Activated B cell treated with CpG ODN at 0.5 μM for 24 hours (primary cell): ENCODE measurements at regions of chr1 and their contacts with region 1.

Region 1: DNA sequence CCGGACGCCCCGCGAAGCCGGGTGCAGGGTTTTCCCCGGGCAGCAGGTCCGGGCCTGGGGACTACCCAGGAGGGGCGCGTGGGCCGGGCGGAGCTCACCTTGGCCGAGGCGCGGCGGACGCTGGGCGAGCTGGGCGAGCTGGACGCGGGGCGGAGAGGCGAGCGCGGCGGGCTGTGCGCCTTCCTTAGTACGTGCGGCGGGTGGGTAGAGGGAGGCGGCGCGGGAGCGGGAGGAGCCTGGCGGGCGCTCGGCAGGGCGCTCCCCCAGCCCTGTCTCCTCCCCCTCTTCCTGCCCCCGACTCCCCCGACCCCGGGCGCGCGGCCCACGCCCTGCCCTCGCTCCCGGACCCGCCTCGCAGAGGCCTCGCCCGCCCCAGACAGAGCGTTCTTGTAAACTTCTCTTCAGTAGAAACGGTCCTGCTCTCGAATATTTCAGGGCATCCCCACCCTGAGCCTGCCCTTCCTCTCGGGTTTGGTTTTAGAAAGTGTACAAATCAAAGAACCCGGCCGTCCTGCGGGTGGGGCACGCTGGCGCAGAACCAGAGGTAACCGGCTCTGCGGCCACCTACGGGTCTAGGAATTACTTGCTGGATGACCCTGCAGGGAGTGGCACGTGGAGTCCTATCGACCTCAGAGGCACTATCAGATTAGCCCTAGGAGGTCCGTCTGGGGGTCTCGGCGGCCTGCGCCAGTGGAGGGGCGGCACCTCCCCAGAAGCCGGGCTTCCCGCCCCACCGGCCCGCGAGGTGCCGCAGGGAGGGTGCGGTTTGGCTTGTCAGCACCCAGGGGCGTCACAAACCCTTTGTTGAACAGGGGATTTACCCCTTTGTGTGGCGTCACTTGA is at the start of gene S100A10:
- DNase-seq: peak; percentile 62
- ATAC-seq: peak; percentile 83
- H3K4me3 Mint-ChIP-seq: peak within 1 kb of the TSS; percentile 93
- H3K27ac Mint-ChIP-seq: peak within 1 kb of the TSS; percentile 83
- H3K4me1 Mint-ChIP-seq: peaks cover 26% of the 10 kb centered on the region
- H3K27me3 Mint-ChIP-seq: no peaks in the 10 kb centered on the region
- CTCF ChIP-seq: no peak
- total RNA-seq, gene S100A10: 62.7 and 63.6 TPM in 2 replicates

Region 2: DNA sequence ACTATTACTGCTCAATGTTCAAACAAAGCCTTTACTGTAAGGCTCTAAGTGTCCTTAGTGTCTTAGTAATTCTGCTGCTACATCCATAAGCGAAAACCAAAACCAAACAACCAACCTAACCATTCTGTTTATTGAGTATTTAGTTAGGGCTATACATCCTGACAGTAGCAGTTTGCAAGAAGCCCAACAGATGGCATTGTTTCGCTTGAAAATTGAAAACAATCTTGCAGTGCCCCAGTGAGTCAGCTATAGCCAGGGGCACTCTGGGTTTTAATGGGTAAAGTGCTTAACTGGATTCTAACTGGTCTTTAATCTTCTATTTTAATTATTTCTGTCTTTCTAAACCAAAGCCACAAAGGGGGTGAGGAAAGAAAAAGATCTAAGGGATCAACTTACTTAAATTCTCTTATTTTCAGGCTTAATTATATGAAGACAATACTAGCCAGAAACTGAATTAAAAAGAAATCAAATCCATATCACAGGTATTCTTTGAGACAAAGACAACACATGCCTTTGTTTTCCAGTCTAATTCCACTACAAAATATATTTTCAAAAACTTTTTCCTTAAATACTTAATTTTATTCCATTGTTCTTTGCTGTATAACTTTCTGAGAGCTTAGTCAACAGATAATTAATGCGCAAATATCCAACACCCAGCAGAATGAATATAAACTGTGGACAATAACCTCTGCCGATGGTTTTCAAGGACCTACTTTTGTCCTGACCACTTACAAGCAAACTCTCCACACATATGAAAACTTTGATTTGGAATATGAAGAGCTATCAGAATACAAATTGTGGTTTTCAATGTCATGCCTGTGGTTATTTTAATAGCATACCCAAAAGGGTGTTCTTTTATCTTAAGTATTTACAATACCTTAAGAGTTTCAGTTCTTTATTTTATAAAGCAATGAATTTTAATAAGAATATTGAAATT is 549.8 kb before region 1 on chr1:
- CTCF ChIA-PET with region 1: no interaction called
- POLR2A ChIA-PET with region 1: no interaction called
- intact Hi-C with region 1: loop called (anchors 5 kb)
- DNase-seq: no peak
- ATAC-seq: peak; percentile 97
- H3K4me3 Mint-ChIP-seq: no peak overlapping the region
- H3K27ac Mint-ChIP-seq: peak overlapping the region; percentile 41
- H3K4me1 Mint-ChIP-seq: peaks cover 53% of the 10 kb centered on the region
- H3K27me3 Mint-ChIP-seq: no peaks in the 10 kb centered on the region
- CTCF ChIP-seq: no peak

Region 3: GRCh38 chr1:151790071-151790940 is 203.6 kb before region 1 on chr1 and contains the start of gene TDRKH:
- CTCF ChIA-PET with region 1: no interaction called
- POLR2A ChIA-PET with region 1: no interaction called
- intact Hi-C with region 1: loop called (anchors 1 kb)
- DNase-seq: peak; percentile 91
- ATAC-seq: peak; percentile 93
- H3K4me3 Mint-ChIP-seq: peak within 1 kb of the TSS; percentile 99
- H3K27ac Mint-ChIP-seq: peak within 1 kb of the TSS; percentile 91
- H3K4me1 Mint-ChIP-seq: peaks cover 21% of the 10 kb centered on the region
- H3K27me3 Mint-ChIP-seq: peaks cover 3% of the 10 kb centered on the region
- CTCF ChIP-seq: no peak
- total RNA-seq, gene TDRKH: 15.1 and 15.6 TPM in 2 replicates

Region 4: GRCh38 chr1:151888972-151889570 is 104.8 kb before region 1 on chr1:
- CTCF ChIA-PET with region 1: interaction called, 8 read pairs
- POLR2A ChIA-PET with region 1: interaction called, 5 read pairs
- intact Hi-C with region 1: loop called (anchors 1 kb)
- DNase-seq: no peak
- ATAC-seq: peak; percentile 58
- H3K4me3 Mint-ChIP-seq: no peak overlapping the region
- H3K27ac Mint-ChIP-seq: no peak overlapping the region
- H3K4me1 Mint-ChIP-seq: peaks cover 9% of the 10 kb centered on the region
- H3K27me3 Mint-ChIP-seq: no peaks in the 10 kb centered on the region
- CTCF ChIP-seq: no peak

Region 5: DNA sequence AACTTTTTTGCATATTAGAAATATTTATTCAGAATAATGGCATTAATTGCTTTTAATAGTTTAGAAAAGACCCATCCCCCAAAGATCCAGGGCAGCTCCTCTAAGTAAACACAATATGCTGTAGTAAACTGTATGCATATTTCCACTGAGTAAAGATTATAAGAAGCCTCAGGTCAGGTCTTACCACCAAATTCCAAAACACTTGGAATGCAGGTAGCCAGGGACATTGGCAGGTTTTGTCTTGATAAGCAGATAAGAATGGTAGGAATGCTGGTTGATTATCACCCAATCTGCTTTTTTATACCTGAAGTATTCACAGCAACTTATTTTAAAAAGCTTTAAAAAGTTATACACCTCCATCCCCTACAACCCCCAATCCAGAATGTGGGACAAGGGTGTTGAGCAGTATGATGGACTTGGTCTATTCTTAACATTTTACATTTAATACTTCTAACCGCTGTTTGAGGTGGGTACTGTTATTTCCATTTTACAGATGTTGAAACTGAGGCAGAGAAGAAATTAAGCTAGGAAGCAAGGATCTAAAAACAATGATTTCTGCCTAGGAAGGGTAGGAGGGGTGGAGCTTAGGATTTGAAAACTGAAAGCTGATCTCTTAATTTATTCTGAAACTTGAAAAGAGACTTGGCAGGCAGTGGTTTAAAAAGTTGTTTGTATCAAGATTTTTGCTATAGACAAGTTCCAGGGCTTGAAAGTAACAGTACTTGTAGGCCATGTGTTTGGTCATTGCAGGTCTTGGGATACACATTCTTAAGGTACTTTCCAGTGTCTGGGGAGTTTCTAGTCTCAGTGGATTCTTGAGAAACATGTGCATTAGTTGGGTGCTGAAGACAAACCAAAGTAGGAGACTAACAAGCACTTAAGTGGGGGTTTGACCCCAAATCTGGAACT is 68.9 kb before region 1 on chr1:
- CTCF ChIA-PET with region 1: interaction called, 5 read pairs
- POLR2A ChIA-PET with region 1: interaction called, 14 read pairs
- intact Hi-C with region 1: no loop called
- DNase-seq: no peak
- ATAC-seq: no peak
- H3K4me3 Mint-ChIP-seq: no peak overlapping the region
- H3K27ac Mint-ChIP-seq: peak overlapping the region; percentile 8
- H3K4me1 Mint-ChIP-seq: peaks cover 36% of the 10 kb centered on the region
- H3K27me3 Mint-ChIP-seq: no peaks in the 10 kb centered on the region
- CTCF ChIP-seq: no peak

Region 6: DNA sequence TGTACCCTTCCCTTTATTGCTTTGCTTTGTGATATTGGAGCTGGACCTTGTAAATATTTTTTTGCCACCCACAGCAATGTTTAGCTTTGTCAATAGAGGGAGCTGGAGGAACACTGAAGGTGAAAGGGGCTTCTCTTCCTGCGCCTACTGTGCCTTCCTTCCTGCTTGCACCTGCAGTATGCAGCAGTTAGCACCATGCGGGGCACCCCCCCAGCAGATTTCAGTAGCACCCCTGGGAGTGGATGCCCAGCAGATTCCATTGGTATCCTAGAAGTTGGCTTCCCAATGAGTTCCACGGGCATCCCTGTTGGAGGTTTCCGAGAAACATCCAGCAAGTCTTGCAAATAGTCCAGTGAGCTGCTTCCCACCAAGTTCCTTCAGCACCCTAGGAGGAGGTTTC is 25.8 kb before region 1 on chr1:
- CTCF ChIA-PET with region 1: interaction called, 204 read pairs
- POLR2A ChIA-PET with region 1: interaction called, 6 read pairs
- intact Hi-C with region 1: loop called (anchors 1 kb)
- DNase-seq: no peak
- ATAC-seq: peak; percentile 86
- H3K4me3 Mint-ChIP-seq: no peak overlapping the region
- H3K27ac Mint-ChIP-seq: no peak overlapping the region
- H3K4me1 Mint-ChIP-seq: peaks cover 7% of the 10 kb centered on the region
- H3K27me3 Mint-ChIP-seq: peaks cover 10% of the 10 kb centered on the region
- CTCF ChIP-seq: no peak

Region 7: DNA sequence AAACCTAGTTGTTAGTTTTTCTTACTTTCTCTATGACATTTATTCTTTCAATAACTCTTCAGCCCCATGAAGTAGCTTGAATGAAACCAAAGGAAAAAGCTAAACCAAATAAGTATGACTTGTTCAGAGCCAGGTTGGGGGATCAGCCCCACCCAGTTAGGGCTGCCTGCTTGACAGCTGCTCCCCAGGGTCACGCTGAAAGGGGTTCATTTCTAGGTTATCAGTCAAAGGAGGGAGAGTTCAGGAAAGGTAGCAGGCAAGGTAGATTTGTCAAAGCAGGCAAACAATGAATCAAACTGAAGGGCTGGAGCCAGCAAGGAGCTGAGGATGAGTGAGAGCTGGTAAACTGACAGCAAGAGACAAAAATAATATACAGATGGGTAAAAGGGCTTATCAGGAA is 46.0 kb after region 1 on chr1:
- CTCF ChIA-PET with region 1: no interaction called
- POLR2A ChIA-PET with region 1: no interaction called
- intact Hi-C with region 1: no loop called
- DNase-seq: no peak
- ATAC-seq: no peak
- H3K4me3 Mint-ChIP-seq: no peak overlapping the region
- H3K27ac Mint-ChIP-seq: no peak overlapping the region
- H3K4me1 Mint-ChIP-seq: peaks cover 31% of the 10 kb centered on the region
- H3K27me3 Mint-ChIP-seq: no peaks in the 10 kb centered on the region
- CTCF ChIP-seq: no peak